Ascending aorta (tissue), 2 donors: ENCODE measurements at regions of chr2 and their contacts with region 1.

Region 1: GRCh38 chr2:66434679-66435548 is at the start of gene MEIS1:
- DNase-seq: peak; percentile 83 to 97
- H3K4me3 ChIP-seq: peak within 1 kb of the TSS; percentile 81 to 82
- H3K27ac ChIP-seq: peak within 1 kb of the TSS; percentile 85 to 91
- H3K4me1 ChIP-seq: no peaks in the 10 kb centered on the region
- H3K27me3 ChIP-seq: no peaks in the 10 kb centered on the region
- CTCF ChIP-seq: no peak
- total RNA-seq, gene MEIS1: 46.7 TPM

Region 2: DNA sequence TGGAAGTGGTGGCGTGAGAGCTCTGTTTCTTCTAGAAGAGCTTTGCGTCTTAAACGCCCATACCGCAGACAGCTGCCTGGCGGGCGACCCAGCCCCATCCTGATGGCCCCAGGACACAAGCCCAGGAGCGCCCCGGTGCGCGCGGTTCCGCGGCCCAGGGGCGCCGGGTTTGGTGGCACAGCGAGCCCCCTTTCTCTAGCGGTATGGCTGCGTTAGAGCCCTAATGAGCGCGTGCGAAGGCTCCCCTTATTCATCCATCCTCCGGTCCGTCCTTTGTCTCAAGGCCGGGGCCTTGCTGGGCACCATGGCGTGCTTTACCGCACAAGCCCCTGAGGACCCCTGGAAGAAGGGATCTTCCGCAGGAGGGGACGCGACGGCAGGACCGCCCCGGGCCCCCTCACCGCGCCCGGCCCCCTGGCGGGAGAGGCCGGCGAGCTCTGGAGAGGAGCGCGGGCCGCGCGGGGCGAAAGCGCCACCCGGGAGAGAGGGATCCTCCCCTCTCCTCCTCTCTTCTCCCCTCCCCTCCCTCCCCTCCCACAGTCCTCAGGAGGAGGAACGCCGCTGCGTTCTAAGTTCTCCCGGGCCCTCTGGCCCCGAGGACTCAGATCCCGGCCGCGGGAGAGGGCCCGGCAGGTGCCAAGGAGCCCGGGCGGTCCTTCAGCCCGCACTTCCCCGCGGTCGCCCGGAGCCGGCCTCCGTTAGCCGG is 1446.3 kb before region 1 on chr2:
- intact Hi-C with region 1: loop called (anchors 10 kb)
- DNase-seq: peak in 1 of 2 donors; percentile 80
- H3K4me3 ChIP-seq: peak overlapping the region; percentile 99
- H3K27ac ChIP-seq: peak overlapping the region; percentile 97 to 99
- H3K4me1 ChIP-seq: peaks cover 0 to 27% of the 10 kb centered on the region in 2 donors
- H3K27me3 ChIP-seq: no peaks in the 10 kb centered on the region
- CTCF ChIP-seq: peak; percentile 53 to 55 (median 54)

Region 3: DNA sequence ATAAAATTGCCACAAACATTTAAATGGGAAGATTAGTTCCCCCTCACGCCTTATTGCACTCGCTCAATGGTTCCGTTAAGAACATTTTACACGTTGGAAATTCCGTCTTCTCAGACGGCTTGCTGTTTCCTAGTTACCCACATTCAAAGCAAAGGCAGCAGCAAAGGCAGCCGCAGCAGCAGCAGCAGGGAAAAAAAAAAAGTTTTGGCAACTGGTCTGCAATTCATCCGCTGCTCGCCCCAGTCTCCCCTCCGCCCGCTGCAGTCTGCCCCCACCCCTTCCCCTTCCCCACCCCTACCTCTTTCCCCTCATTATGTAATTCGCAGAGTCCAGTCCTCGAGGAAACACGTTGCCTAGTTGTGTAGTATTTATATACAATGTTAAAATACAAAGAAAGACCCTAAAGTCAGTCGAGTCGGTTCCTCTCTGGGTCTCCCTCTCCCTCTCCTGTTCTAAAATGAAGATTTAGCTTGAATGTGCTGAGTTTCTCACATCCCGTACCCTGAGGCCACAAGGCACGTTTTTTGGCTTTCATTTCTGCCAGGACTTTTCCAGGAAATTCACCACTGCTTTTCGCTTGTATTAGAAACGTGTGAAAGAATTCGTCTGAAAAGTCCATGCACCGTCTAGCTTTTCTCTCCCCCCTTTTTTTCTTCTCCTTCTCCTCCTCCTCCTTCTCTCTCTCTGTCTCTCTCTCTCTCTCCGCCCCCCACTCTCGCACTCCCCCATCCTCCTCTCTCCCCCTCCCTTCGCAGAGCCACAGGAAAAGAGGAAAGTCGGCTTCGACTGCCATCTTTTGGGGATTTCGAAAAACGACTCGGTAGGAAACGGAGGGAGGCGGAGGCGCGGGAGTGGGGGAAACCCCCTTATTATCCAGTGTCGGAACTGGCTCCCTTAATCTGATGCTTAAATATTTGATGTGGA is 140.0 kb after region 1 on chr2:
- intact Hi-C with region 1: loop called (anchors 1 kb)
- DNase-seq: peak in 1 of 2 donors; percentile 83
- H3K4me3 ChIP-seq: peak overlapping the region; percentile 82 to 86
- H3K27ac ChIP-seq: peak overlapping the region; percentile 72 to 77
- H3K4me1 ChIP-seq: peaks cover 15 to 23% of the 10 kb centered on the region in 2 donors
- H3K27me3 ChIP-seq: peaks cover 21% of the 10 kb centered on the region
- CTCF ChIP-seq: peak; percentile 49 to 70 (median 60)

Region 4: GRCh38 chr2:66667258-66667780 is 232.4 kb after region 1 on chr2:
- intact Hi-C with region 1: no loop called
- DNase-seq: no peak
- H3K4me3 ChIP-seq: no peak overlapping the region
- H3K27ac ChIP-seq: no peak overlapping the region
- H3K4me1 ChIP-seq: no peaks in the 10 kb centered on the region
- H3K27me3 ChIP-seq: no peaks in the 10 kb centered on the region
- CTCF ChIP-seq: no peak

Region 5: DNA sequence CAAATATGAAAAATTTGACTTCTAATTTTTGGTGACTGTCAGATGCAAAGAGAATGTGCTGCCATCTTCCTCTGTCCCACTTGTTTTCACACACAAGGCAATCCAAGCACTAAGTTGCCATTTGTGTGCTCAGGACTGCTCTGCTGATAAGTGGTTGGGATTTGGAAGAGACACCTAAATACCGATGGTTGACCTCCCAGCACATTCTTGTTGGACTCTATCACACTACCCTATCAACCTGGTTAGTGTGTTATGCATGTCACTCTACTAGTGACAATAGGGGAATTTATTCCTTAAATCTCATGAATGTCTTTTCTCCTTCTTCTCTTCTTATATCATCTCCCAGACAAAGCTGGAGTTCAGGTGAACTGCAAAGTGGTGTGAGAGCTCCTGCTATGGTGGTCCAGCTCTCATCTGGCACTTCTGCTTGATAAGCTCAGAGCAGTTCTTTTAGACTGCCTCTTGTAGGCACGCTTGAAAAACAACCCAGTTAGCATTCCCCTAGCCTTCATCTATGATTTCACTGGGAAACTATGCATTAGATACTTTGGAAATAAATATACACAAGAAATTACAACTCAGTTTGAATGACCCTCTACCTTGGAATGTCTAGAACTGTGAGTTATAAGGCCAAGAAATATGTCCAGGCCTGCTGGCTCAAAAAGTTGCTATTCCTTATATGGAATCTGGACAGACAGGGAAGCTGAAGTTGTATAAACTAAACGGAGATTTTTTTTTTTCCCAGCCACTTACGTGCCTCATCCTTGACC is 404.8 kb after region 1 on chr2:
- intact Hi-C with region 1: loop called (anchors 2 kb)
- DNase-seq: peak in 1 of 2 donors; percentile 67
- H3K4me3 ChIP-seq: peak overlapping the region; percentile 14 to 30
- H3K27ac ChIP-seq: peak overlapping the region; percentile 58 to 80
- H3K4me1 ChIP-seq: peaks cover 0 to 6% of the 10 kb centered on the region in 2 donors
- H3K27me3 ChIP-seq: no peaks in the 10 kb centered on the region
- CTCF ChIP-seq: no peak

Region 6: GRCh38 chr2:67322353-67323001 is 887.6 kb after region 1 on chr2:
- intact Hi-C with region 1: loop called (anchors 2 kb)
- DNase-seq: peak in 1 of 2 donors; percentile 77
- H3K4me3 ChIP-seq: peak overlapping the region in 1 of 2 donors; percentile 11
- H3K27ac ChIP-seq: peak overlapping the region; percentile 25 to 44
- H3K4me1 ChIP-seq: peaks cover 0 to 10% of the 10 kb centered on the region in 2 donors
- H3K27me3 ChIP-seq: no peaks in the 10 kb centered on the region
- CTCF ChIP-seq: peak; percentile 40 to 70 (median 61)

Region 7: GRCh38 chr2:67650291-67651133 is 1215.6 kb after region 1 on chr2:
- intact Hi-C with region 1: loop called (anchors 5 kb)
- DNase-seq: peak; percentile 31 to 92
- H3K4me3 ChIP-seq: no peak overlapping the region
- H3K27ac ChIP-seq: peak overlapping the region; percentile 23 to 61
- H3K4me1 ChIP-seq: peaks cover 5 to 23% of the 10 kb centered on the region in 2 donors
- H3K27me3 ChIP-seq: no peaks in the 10 kb centered on the region
- CTCF ChIP-seq: peak; percentile 44 to 73 (median 65)

Region 8: DNA sequence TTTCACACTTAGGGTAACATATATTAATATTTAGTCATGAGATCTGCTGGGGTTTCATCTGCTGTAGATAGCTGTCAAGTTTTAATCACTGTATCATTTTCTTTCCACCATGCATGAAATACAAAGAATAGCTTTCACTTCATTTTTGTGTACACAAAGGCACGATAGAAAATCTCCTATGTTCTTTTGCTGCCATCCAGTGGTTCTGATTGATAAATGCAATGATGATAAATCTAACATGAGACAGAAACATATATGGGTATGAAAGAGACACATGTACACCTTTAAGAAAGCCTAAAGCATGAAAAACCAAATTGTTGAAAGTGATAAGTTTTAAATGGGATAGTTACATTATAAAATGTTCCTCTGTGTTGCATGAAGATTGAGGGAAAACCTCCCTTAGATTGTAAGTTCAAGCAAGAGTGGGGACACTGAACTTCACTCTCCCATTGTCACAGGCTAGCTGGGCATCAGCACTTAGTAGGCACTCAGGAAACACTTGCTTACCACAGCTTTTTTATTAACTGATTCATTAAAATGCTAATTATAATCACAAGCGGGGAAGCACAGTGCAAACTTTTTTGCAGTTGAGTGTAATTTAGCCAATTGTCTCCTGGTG is 1596.7 kb after region 1 on chr2:
- intact Hi-C with region 1: loop called (anchors 5 kb)
- DNase-seq: no peak
- H3K4me3 ChIP-seq: no peak overlapping the region
- H3K27ac ChIP-seq: no peak overlapping the region
- H3K4me1 ChIP-seq: peaks cover 0 to 4% of the 10 kb centered on the region in 2 donors
- H3K27me3 ChIP-seq: no peaks in the 10 kb centered on the region
- CTCF ChIP-seq: peak; percentile 56 to 76 (median 74)